ENCODE measurements at regions of chr14 and their contacts with region 1.

Region 1: DNA sequence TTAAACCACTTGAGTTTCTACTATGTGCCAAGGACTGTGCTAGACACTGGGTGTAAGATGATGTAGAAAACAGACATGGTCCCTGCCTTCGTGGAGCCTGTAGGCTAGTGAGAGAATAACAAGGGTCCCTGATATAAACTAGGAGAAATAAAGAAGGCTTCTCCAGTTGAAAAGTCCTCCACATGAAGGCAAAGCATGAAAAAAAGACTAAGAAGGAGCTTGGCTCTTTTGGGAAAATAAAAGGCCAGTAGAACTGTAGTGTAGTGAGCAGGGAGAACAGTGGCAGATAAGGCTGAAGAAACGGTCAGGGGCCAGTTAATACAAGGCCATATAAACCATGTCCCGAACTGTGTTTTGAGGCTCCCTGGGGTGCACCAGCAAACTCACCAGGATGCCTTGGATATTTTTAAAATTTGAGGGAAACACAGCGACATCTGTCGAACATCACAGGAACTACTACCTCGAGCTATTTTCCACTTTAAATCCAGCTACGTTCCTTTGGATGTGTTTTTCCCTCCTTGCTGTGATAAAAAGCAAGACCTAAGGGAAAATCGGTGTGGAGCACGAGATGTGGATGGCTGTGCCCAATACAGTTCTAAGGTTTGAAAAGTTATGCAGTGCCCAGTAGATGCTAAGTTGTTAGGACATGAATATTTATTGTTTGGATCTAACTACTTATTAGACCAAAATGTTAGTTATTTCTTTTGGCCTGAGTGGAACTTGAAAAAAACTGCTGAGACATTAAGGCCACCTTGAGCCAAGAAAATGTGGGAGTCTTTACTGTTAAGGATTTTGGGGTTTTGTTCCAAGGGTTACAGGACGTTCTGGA is 8.5 kb upstream of the CFL2 start:
- DNase-seq: no peak
- H3K4me3 ChIP-seq: no peak overlapping the region
- H3K27me3 ChIP-seq: no peaks in the 10 kb centered on the region
- CTCF ChIP-seq: peak; percentile 74

Region 2: GRCh38 chr14:34043627-34044372 is 679.1 kb before region 1 on chr14:
- CTCF ChIA-PET with region 1: no interaction called
- POLR2A ChIA-PET with region 1: no interaction called
- DNase-seq: no peak
- H3K4me3 ChIP-seq: no peak overlapping the region
- H3K27me3 ChIP-seq: no peaks in the 10 kb centered on the region; the same call in 1 of the 2 replicates
- CTCF ChIP-seq: no peak

Region 3: DNA sequence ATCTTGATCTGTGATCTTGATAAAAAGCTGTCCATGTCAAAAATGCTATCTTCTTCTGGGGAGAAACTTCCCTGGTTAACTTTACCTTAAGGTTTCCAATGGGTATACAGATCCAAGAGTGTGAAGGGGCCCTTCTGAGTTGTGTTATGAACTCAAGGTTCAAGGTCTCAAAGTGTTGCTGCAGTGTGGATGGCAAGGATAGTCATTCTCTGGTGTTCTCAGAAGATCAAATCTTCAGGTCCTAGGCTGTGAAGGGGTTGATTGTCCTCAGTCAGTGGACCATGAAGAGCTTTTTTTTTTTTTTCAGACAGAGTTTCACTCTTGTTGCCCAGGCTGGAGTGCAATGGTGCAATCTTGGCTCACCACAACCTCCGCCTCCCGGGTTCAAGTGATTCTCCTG is 375.2 kb before region 1 on chr14:
- CTCF ChIA-PET with region 1: no interaction called
- POLR2A ChIA-PET with region 1: no interaction called
- DNase-seq: no peak
- H3K4me3 ChIP-seq: no peak overlapping the region
- H3K27me3 ChIP-seq: no peaks in the 10 kb centered on the region
- CTCF ChIP-seq: no peak

Region 4: DNA sequence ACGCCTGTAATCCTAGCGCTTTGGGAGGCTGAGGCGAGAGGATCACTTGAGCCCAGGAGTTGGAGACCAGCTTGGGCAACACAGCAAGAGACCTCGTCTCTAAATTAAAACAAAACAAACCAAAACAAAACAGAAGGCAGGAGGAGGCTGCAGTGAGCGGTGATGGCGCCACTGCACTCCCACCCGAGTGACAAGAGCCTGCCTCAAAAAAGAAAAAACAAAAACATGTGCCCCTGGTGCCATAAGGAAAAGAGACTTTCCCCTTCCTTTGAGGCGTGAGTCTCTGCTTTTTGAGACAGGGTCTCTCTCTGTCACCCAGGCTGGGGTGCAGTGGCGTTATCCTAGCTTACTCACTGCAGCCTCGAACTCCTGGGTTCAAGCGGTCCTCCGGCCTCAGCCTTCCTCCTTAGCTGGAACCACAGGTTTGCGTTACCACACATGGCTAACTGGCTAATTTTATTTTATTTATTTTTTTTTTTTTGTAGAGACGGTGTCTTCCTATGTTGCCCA is 174.4 kb before region 1 on chr14:
- CTCF ChIA-PET with region 1: no interaction called
- POLR2A ChIA-PET with region 1: interaction called, 10 read pairs
- DNase-seq: no peak
- H3K4me3 ChIP-seq: no peak overlapping the region
- H3K27me3 ChIP-seq: no peaks in the 10 kb centered on the region
- CTCF ChIP-seq: no peak

Region 5: GRCh38 chr14:34671716-34672115 is 51.2 kb before region 1 on chr14:
- CTCF ChIA-PET with region 1: interaction called, 94 read pairs
- POLR2A ChIA-PET with region 1: no interaction called
- DNase-seq: no peak
- H3K4me3 ChIP-seq: no peak overlapping the region
- H3K27me3 ChIP-seq: no peaks in the 10 kb centered on the region
- CTCF ChIP-seq: no peak

Region 6: DNA sequence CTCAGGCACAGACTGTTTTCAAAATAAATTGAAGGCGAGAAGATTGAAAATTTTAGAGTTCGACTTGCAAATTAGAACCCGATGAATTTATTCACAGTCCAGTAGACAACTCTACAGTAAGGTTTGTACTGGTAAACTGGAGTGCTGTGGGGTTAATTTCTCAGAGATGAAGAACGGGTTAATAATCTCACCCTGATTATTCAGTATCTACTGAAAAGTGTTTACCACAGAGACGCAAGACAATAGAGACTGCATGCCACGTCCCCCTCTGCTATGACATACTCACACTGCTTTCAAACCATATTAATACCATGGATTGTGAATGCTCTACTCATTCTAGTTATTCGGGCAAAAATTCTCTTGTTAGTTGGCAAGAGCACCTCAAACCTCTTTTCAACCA is 44.6 kb before region 1 on chr14:
- CTCF ChIA-PET with region 1: interaction called, 94 read pairs
- POLR2A ChIA-PET with region 1: no interaction called
- DNase-seq: no peak
- H3K4me3 ChIP-seq: no peak overlapping the region
- H3K27me3 ChIP-seq: no peaks in the 10 kb centered on the region
- CTCF ChIP-seq: no peak

Region 7: GRCh38 chr14:34733235-34733634 is 10.3 kb after region 1 on chr14:
- CTCF ChIA-PET with region 1: interaction called, 31 read pairs
- POLR2A ChIA-PET with region 1: no interaction called
- DNase-seq: no peak
- H3K4me3 ChIP-seq: no peak overlapping the region
- H3K27me3 ChIP-seq: no peaks in the 10 kb centered on the region
- CTCF ChIP-seq: no peak

Region 8: DNA sequence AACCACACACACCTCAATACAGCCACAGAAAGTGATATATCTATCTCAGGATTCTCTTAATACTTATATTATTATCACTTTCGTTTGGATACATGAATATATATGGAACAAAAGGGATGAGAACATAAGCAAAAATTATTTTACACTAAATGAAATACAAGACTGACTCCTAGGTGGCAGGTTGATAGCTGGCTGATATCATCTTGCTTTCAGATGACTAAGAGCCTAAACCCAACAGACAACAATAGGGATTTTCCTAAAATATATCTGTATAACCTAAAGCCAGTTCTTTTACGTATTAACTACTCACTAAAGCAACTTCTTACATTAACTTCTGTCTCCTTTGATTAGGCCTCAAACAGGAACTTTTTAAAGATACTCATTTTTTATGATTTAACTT is 87.1 kb after region 1 on chr14:
- CTCF ChIA-PET with region 1: no interaction called
- POLR2A ChIA-PET with region 1: no interaction called
- DNase-seq: no peak
- H3K4me3 ChIP-seq: no peak overlapping the region
- H3K27me3 ChIP-seq: no peaks in the 10 kb centered on the region
- CTCF ChIP-seq: no peak

Measured in BJ (cell line).